Vagina (tissue), 2 donors: ENCODE measurements at regions of chrX and their contacts with region 1.

Region 1: DNA sequence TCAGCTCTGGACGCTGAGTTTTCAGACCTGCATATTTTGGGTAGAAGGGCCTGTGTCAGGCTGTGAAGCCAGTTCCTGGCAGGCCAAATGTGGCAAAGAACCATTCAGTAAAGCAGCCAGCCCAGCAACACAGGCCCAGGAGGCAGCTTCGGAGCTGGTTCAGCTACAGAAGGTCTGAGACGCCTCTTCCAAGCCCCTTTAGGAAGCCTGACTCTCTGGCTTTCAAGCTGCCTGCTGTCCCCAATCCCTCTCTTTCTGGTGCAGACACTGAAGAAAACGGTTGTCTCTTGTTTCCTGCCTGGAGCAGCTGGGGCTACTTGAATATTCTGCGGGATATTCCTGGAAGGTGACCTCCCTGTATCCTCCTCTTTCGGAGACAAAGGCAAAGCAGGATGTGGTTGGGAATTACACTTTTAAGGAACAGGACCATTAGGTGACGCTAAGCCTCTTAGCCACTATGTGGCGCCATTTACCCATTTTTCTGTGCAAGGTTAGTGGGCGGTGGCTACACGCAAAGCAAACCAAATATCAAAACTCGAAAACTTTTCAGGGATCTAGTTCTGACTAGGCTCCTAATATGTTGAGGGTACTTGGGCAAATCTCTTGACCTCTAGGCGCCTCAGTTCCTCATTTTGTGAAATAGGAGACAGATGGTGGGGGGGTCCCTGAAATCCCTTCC is 47.2 kb upstream of the LAS1L start:
- DNase-seq: peak in 1 of 2 donors; percentile 78
- H3K4me3 ChIP-seq: no peak overlapping the region
- H3K27ac ChIP-seq: no peak overlapping the region
- H3K4me1 ChIP-seq: no peaks in the 10 kb centered on the region
- H3K27me3 ChIP-seq: no peaks in the 10 kb centered on the region
- CTCF ChIP-seq: peak; percentile 35 to 73 (median 71)
- POLR2A ChIP-seq: no peak

Region 2: GRCh38 chrX:65644621-65645270 is 62.9 kb after region 1 on chrX:
- intact Hi-C with region 1: no loop called
- DNase-seq: no peak
- H3K4me3 ChIP-seq: no peak overlapping the region
- H3K27ac ChIP-seq: peak overlapping the region; percentile 68
- H3K4me1 ChIP-seq: peaks cover 33% of the 10 kb centered on the region
- H3K27me3 ChIP-seq: no peaks in the 10 kb centered on the region
- CTCF ChIP-seq: no peak
- POLR2A ChIP-seq: no peak

Region 3: GRCh38 chrX:65985922-65986588 is 404.3 kb after region 1 on chrX:
- intact Hi-C with region 1: loop called (anchors 10 kb)
- DNase-seq: no peak
- H3K4me3 ChIP-seq: no peak overlapping the region
- H3K27ac ChIP-seq: no peak overlapping the region
- H3K4me1 ChIP-seq: no peaks in the 10 kb centered on the region
- H3K27me3 ChIP-seq: no peaks in the 10 kb centered on the region
- CTCF ChIP-seq: peak in 1 of 3 experiments; percentile 50
- POLR2A ChIP-seq: no peak